ENCODE measurements at regions of chr16 and their contacts with region 1.

Region 1: DNA sequence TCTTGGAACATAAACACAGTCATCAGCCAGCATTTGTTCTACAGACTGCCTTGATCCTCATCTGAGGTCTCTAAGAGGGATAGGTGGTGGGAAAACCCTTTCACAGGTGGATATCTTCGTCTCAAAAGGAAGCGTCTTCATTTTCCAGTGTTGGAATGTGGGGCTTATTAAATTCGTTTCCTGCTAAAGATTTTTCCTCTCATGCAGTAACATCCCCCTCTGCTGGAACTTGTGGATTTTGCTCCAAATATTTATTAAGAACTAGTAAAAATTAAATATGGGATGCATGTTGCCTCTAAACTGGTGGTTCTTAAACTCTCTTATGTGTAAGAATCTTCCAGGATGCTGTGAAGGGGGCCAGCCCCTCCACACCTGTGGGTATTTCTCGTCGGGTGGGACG is 20.1 kb upstream of the MLYCD start:
- DNase-seq: no peak
- ATAC-seq: no peak
- H3K4me3 ChIP-seq: no peak overlapping the region
- H3K27ac ChIP-seq: no peak overlapping the region
- H3K4me1 ChIP-seq: no peaks in the 10 kb centered on the region
- H3K27me3 ChIP-seq: no peaks in the 10 kb centered on the region
- CTCF ChIP-seq: peak; percentile 32

Region 2: DNA sequence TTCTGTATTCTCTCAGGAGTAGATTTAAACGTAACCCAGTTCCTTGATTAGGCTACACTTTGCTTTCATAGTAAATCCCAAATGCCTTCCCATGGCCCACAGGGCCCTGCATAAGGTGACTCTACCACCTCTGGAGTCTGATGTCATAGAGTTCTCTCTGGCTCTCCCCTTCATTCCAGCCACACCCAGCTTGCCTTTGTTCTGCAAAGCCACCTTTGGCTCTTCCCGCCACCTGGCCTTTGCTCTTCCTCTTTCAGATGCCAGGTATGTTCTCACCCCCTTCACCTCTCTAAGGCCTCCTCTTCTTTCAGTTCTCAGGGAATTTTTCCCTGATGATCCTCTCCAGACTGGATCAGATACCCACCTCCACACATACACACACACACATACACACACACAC is 212.4 kb before region 1 on chr16:
- intact Hi-C with region 1: no loop called
- DNase-seq: no peak
- ATAC-seq: no peak
- H3K4me3 ChIP-seq: no peak overlapping the region
- H3K27ac ChIP-seq: no peak overlapping the region
- H3K4me1 ChIP-seq: no peaks in the 10 kb centered on the region
- H3K27me3 ChIP-seq: no peaks in the 10 kb centered on the region
- CTCF ChIP-seq: no peak

Region 3: GRCh38 chr16:83835586-83836566 is 43.0 kb before region 1 on chr16:
- intact Hi-C with region 1: loop called in 1 of 2 experiments (anchors 5 kb)
- DNase-seq: no peak
- ATAC-seq: no peak
- H3K4me3 ChIP-seq: no peak overlapping the region
- H3K27ac ChIP-seq: no peak overlapping the region
- H3K4me1 ChIP-seq: no peaks in the 10 kb centered on the region
- H3K27me3 ChIP-seq: no peaks in the 10 kb centered on the region
- CTCF ChIP-seq: no peak